ENCODE measurements at regions of chr10 and their contacts with region 1.

Region 1: GRCh38 chr10:91251430-91252056 is 31.1 kb downstream of the PCGF5 start:
- DNase-seq: no peak
- H3K4me3 ChIP-seq: no peak overlapping the region
- H3K27ac ChIP-seq: no peak overlapping the region
- H3K27me3 ChIP-seq: no peaks in the 10 kb centered on the region
- CTCF ChIP-seq: peak; percentile 93

Region 2: GRCh38 chr10:90665905-90666662 is 585.5 kb before region 1 on chr10:
- CTCF ChIA-PET with region 1: no interaction called
- POLR2A ChIA-PET with region 1: no interaction called
- DNase-seq: no peak
- H3K4me3 ChIP-seq: no peak overlapping the region
- H3K27ac ChIP-seq: no peak overlapping the region
- H3K27me3 ChIP-seq: no peaks in the 10 kb centered on the region
- CTCF ChIP-seq: no peak

Region 3: GRCh38 chr10:90865401-90865800 is 386.1 kb before region 1 on chr10:
- CTCF ChIA-PET with region 1: interaction called, 10 read pairs
- POLR2A ChIA-PET with region 1: no interaction called
- DNase-seq: no peak
- H3K4me3 ChIP-seq: no peak overlapping the region
- H3K27ac ChIP-seq: no peak overlapping the region
- H3K27me3 ChIP-seq: peaks cover 17% of the 10 kb centered on the region
- CTCF ChIP-seq: peak; percentile 57

Region 4: DNA sequence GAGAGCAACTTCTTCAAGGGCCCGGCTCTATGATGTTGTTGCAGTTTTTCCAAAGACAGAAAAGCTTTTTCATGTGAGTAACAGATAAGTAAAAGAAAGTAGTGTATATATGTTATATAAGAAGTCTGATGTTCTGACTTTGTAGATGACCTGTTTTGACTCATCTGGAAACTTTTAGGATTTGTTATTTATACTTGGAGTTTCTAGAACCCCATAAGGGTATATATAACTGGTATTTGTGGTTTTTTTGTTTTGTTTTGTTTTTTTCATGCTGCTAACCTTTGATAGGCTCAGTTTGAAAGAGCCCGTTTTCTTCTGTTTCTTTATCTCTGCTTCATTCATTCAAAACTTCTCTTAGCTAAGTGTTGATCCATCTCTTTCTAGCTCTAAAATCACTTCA is 372.5 kb before region 1 on chr10:
- CTCF ChIA-PET with region 1: interaction called, 54 read pairs
- POLR2A ChIA-PET with region 1: no interaction called
- DNase-seq: no peak
- H3K4me3 ChIP-seq: no peak overlapping the region
- H3K27ac ChIP-seq: no peak overlapping the region
- H3K27me3 ChIP-seq: no peaks in the 10 kb centered on the region
- CTCF ChIP-seq: no peak

Region 5: DNA sequence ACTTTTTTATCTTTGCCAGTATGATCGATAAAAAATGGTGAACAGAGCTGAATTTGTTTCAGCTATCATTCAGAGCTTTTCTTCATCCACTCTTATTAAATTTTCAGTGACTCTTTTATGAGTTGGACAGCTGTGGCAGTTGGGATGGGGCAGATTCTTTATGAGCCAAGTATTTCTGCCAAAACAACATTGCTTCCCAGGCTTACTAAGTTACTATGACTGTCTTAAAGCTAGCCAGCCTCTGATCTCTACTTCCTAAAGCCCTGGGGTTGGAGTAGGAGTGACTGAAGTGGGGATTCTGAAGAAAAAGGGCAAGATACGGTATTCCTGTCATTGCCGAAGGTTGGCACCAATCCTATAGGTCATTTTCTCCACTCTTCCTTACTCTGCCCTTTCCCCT is 367.1 kb before region 1 on chr10:
- CTCF ChIA-PET with region 1: interaction called, 54 read pairs
- POLR2A ChIA-PET with region 1: no interaction called
- DNase-seq: no peak
- H3K4me3 ChIP-seq: no peak overlapping the region
- H3K27ac ChIP-seq: peak overlapping the region; percentile 49
- H3K27me3 ChIP-seq: no peaks in the 10 kb centered on the region
- CTCF ChIP-seq: no peak

Region 6: GRCh38 chr10:90920986-90921666 is 330.4 kb before region 1 on chr10 and contains the start of gene ANKRD1:
- CTCF ChIA-PET with region 1: interaction called, 30 read pairs
- POLR2A ChIA-PET with region 1: no interaction called
- DNase-seq: peak; percentile 50
- H3K4me3 ChIP-seq: no peak within 1 kb of the TSS
- H3K27ac ChIP-seq: no peak within 1 kb of the TSS
- H3K27me3 ChIP-seq: no peaks in the 10 kb centered on the region
- CTCF ChIP-seq: no peak
- polyA plus RNA-seq, gene ANKRD1: 0.50 and 0.53 TPM in 2 replicates

Region 7: DNA sequence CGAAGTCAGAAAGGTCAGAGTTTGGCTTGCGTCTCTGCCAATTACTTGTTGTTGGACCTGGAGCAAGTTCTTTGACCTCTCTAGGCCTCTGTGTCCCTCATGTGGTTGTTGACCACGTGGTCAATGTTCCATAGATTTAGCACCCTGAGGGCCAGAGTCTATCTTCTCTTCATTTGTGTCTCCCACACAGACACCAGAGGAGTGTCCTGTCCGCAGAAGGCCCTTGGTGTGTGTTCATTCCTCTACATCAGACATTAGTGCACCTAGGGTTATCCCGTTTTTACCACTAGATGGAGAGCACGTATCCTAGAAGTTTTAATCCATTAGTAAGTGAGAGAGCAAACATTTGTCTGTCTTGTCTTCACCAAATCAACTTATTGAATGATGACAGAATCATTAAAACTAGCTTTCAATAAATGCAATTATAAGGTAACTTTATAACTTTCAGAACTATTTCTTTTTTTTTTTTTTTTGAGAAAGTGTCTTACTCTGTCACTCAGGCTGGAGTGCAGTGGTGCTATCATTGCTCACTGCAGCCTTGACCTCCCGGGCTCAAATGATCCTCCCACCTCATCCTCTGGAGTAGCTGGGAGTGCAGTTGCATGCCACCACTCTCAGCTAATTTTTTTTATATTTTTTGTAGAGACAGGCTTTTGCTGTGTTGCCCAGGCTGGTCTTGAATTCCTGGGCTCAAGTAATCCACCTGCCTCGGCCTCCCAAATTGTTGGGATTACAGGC is 208.2 kb before region 1 on chr10:
- CTCF ChIA-PET with region 1: interaction called, 26 read pairs
- POLR2A ChIA-PET with region 1: no interaction called
- DNase-seq: no peak
- H3K4me3 ChIP-seq: no peak overlapping the region
- H3K27ac ChIP-seq: no peak overlapping the region
- H3K27me3 ChIP-seq: peaks cover 7% of the 10 kb centered on the region
- CTCF ChIP-seq: peak; percentile 47

Region 8: DNA sequence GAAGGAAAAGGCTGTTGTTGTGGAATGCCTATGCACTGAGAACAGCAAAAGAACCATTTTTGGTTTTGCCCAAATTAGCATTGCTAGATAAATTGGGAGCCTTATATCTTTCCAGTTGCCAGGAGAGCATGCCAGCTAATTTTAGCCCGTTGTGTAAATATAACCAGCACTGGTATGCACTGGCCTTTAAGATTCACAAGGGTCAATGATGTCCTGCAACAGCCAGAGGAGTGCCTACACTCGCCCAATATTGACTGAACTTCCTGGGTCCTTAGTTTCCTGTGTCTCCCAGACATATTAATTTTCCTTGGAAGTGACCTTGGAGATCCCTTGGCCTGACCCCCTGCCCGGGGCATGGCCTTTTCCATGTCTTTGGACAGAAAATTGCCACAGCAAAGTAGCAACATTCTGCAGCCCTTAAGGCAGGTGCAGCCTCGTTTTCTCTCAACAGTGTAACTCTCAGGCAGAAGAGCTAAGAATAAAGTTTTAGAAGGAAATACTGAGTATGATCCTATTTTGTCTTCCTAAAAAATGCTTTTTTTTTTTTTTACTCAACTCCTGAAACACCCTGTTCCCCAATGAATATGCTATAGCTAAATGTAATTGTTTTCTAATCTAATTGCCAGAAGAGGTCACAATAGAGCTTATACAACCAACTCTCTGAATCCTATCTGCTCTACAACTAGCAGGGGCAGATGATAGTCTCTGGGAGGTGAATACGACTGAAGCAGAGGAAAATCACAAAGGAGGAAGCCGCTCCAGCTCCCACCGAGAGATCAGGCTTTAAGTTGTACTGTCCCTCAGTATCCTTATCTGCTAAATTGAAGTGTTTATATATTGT is 163.0 kb before region 1 on chr10:
- CTCF ChIA-PET with region 1: interaction called, 41 read pairs
- POLR2A ChIA-PET with region 1: no interaction called
- DNase-seq: no peak
- H3K4me3 ChIP-seq: no peak overlapping the region
- H3K27ac ChIP-seq: no peak overlapping the region
- H3K27me3 ChIP-seq: peaks cover 2% of the 10 kb centered on the region
- CTCF ChIP-seq: peak; percentile 13; the same call in 1 of the 2 replicates

Measured in AG04450 (cell line).